ENCODE measurements at regions of chr2 and their contacts with region 1.

Region 1: GRCh38 chr2:234241656-234242458 is 191.4 kb downstream of the SPP2 start:
- DNase-seq: peak; percentile 30
- H3K4me3 ChIP-seq: no peak overlapping the region
- H3K27ac ChIP-seq: no peak overlapping the region
- H3K4me1 ChIP-seq: peaks cover 32% of the 10 kb centered on the region
- H3K27me3 ChIP-seq: no peaks in the 10 kb centered on the region
- CTCF ChIP-seq: no peak
- POLR2A ChIP-seq: no peak

Region 2: DNA sequence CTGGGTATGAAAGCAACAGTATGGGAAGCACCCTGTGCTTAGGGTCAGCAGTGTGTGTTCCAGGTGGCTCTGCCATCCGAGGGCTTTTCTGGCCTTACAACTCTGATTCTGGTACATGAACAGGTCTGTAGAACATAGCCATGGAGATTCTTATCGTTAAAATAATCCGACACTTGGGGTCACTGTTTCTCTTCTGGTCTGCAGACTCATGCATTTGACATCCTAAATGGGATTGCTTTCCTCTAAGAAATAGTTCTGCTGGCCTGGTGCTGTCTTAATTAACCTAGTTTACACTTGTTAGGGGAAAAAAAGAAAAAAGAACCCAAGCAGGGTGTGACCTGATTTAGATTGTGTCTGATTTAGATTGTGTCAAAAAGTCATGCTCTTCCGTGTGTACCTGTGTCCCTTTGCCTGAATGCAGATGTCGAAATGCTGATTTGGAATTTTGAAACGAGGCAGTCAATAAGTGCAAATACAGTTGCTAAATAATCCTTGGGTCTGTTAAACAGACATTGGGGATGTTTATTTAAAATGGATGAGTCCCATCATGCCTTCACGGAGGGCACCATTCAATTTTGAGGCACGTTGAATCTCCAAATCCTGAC is 265.1 kb before region 1 on chr2:
- CTCF ChIA-PET with region 1: no interaction called
- POLR2A ChIA-PET with region 1: no interaction called
- dilution Hi-C with region 1: no loop called
- intact Hi-C with region 1: loop called (anchors 1 kb)
- DNase-seq: peak; percentile 57
- H3K4me3 ChIP-seq: no peak overlapping the region
- H3K27ac ChIP-seq: no peak overlapping the region
- H3K4me1 ChIP-seq: peaks cover 13% of the 10 kb centered on the region
- H3K27me3 ChIP-seq: peaks cover 0 to 3% of the 10 kb centered on the region in 2 experiments
- CTCF ChIP-seq: peak; percentile 4 to 22
- POLR2A ChIP-seq: no peak

Region 3: DNA sequence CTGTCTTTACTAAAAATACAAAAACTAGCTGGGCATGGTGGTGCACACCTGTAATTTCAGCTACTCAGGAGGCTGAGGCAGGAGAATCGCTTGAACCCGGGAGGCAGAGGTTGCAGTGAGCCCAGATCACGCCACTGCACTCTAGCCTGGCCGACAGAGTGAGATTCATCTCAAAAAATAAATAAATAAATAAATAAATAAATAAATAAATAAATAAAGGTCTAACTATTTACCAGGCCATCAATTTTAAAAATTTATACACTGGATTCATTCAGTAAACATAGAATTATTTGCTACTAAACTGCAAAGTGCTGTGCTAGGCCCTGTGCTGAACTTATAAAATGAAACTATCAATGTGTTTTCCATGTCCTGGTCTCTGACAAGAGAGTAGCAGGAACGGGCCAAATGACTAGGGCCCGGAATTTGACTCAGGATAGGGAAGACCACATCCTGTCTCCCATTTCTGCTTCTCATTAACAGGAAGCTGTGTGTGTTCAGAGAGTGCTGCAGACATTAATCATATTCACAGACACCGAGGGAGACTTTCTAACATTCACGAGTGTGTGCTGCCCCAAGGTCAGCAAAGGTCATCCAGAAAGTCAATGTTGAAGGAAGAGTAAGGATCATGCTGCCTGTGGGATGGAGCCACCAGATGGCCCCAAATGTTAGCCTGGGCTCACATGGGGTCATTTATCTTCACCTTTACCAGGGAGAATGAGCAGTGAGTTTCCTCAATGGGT is 95.6 kb before region 1 on chr2:
- CTCF ChIA-PET with region 1: interaction called, 3 read pairs
- POLR2A ChIA-PET with region 1: no interaction called
- dilution Hi-C with region 1: no loop called
- intact Hi-C with region 1: loop called (anchors 1 kb)
- DNase-seq: peak; percentile 78
- H3K4me3 ChIP-seq: no peak overlapping the region
- H3K27ac ChIP-seq: peak overlapping the region; percentile 78
- H3K4me1 ChIP-seq: peaks cover 10% of the 10 kb centered on the region
- H3K27me3 ChIP-seq: no peaks in the 10 kb centered on the region
- CTCF ChIP-seq: no peak
- POLR2A ChIP-seq: no peak

Region 4: GRCh38 chr2:234203135-234203984 is 38.5 kb before region 1 on chr2:
- CTCF ChIA-PET with region 1: interaction called, 6 read pairs
- POLR2A ChIA-PET with region 1: no interaction called
- dilution Hi-C with region 1: no loop called
- intact Hi-C with region 1: loop called (anchors 1 kb)
- DNase-seq: peak; percentile 98
- H3K4me3 ChIP-seq: peak overlapping the region in 1 of 3 experiments; percentile 14
- H3K27ac ChIP-seq: peak overlapping the region; percentile 93
- H3K4me1 ChIP-seq: peaks cover 17% of the 10 kb centered on the region
- H3K27me3 ChIP-seq: no peaks in the 10 kb centered on the region
- CTCF ChIP-seq: no peak
- POLR2A ChIP-seq: no peak

Region 5: DNA sequence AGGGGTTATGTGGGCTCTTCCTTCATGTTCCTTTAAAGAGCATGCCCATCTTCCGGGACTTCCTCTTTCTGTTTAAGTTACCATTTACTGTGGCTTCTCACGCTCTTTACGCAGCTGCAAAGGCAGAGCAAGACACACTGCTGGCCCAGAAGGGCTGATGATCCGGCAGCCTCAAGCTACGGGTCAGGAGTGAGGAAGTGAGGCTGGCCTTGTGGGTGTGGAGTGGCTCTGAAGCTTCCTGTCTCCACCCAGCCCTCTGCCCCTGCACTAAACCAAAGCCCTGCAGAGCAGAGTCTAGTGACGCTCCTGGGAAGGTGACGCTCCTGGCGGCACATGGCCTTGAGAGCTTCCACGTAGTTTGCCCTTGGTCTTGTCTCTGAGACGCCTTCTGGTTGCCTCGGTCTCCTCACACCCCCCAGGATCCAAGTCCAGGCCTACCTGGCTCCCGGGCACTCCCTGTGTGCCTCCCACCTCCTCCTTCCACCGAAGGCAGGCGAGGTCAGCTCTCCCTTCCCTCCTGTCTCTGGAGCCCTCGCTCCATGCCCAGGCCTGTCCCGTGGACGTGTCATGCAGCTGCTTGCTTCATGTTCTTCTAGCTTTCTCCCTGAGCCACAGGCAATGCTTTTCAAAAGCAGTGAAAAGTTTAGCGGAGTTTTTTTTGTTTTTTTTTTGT is 204.7 kb after region 1 on chr2:
- CTCF ChIA-PET with region 1: no interaction called
- POLR2A ChIA-PET with region 1: no interaction called
- dilution Hi-C with region 1: no loop called
- intact Hi-C with region 1: loop called (anchors 5 kb)
- DNase-seq: peak; percentile 52
- H3K4me3 ChIP-seq: no peak overlapping the region
- H3K27ac ChIP-seq: peak overlapping the region; percentile 2
- H3K4me1 ChIP-seq: peaks cover 26% of the 10 kb centered on the region
- H3K27me3 ChIP-seq: no peaks in the 10 kb centered on the region
- CTCF ChIP-seq: no peak
- POLR2A ChIP-seq: no peak

Measured in endothelial cell of umbilical vein (primary cell).